ENCODE measurements at regions of chr5 and their contacts with region 1.

Region 1: GRCh38 chr5:96868603-96869371 is 7.5 kb upstream of the ERAP2 start:
- DNase-seq: peak; percentile 42
- H3K4me3 ChIP-seq: no peak overlapping the region
- CTCF ChIP-seq: peak; percentile 92

Region 2: GRCh38 chr5:96226941-96227552 is 641.7 kb before region 1 on chr5:
- CTCF ChIA-PET with region 1: no interaction called
- POLR2A ChIA-PET with region 1: no interaction called
- DNase-seq: peak; percentile 94
- H3K4me3 ChIP-seq: no peak overlapping the region
- CTCF ChIP-seq: no peak

Region 3: GRCh38 chr5:96668725-96669124 is 200.1 kb before region 1 on chr5:
- CTCF ChIA-PET with region 1: no interaction called
- POLR2A ChIA-PET with region 1: no interaction called
- DNase-seq: no peak
- H3K4me3 ChIP-seq: no peak overlapping the region
- CTCF ChIP-seq: no peak

Region 4: DNA sequence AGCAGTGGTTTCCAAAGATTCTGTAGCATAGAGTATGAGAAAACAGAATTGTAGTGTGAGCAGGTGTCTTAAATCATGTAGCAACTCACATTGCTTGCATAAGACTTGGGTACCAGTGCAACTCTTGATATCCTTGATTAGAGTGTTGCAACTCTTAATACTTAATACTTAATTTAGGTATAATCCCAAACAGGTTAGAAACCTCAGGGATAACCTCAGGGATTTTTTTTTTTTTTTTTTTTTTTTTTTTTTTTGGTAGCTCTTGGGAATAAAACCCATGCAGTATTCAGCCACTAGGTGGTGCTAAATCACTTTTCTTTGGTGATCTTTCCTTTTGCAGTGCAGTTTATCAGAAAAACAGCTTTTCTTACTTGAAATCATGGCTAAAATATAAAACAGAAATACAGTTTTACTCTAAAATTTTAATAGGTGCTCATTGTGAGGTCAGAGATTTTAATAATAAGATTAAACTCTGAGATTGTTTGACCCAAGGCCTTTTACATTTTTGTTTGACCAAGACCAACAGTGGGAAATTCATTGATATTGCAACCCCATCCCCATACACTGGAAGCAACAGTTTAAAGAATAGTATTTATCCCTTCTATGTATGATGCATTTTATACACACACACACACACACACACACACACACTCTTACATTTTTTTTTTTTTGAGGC is 116.3 kb before region 1 on chr5:
- CTCF ChIA-PET with region 1: interaction called, 11 read pairs
- POLR2A ChIA-PET with region 1: no interaction called
- DNase-seq: no peak
- H3K4me3 ChIP-seq: no peak overlapping the region
- CTCF ChIP-seq: peak; percentile 35

Region 5: DNA sequence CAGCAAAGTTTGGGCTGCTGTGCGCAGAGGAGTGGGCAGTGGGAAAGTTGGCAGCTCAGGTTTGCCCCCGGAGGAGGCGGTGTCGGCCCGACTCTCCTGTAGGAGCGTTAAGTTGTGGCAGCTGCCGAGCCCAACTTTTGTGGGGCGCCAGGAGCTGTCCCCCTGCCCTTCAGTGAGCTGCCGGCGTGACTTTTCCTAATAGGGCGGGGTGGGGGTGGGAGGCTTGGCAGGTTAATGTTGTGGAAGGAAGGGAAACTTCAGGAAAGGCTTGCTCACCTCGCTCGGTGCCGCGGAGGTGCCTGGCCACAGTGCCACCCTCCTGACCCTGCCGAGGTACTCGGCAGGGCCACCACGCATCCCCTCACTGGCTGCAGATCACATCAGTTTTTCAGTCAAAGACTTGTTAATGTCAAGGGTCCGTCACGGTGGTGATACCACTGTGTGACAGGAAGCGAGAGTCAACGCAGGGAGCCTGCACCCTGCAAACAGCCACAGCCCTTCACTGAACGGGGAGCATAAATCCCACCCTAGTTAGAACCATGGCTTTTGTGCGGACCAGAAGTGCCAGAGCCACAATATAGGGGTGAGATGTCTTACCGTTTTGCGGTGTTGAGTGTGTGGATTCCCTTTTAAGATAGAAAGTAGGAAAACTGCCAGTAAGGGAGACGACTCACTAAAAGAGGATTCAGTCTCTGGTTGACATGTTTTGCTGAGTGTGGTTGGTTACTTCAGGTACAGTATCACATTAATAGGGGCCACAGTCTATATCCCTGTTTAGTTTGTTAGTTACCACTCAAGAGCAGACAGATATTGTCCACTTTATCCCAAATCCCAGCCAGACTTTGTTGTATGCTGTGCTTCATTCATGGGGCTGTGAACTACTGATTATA is 67.9 kb after region 1 on chr5:
- CTCF ChIA-PET with region 1: interaction called, 14 read pairs
- POLR2A ChIA-PET with region 1: interaction called, 3 read pairs
- DNase-seq: no peak
- H3K4me3 ChIP-seq: peak overlapping the region; percentile 80
- CTCF ChIP-seq: no peak

Region 6: GRCh38 chr5:97044052-97044451 is 175.3 kb after region 1 on chr5:
- CTCF ChIA-PET with region 1: interaction called, 40 read pairs
- POLR2A ChIA-PET with region 1: no interaction called
- DNase-seq: no peak
- H3K4me3 ChIP-seq: no peak overlapping the region
- CTCF ChIP-seq: peak; percentile 16

Region 7: GRCh38 chr5:97149709-97150108 is 280.9 kb after region 1 on chr5:
- CTCF ChIA-PET with region 1: interaction called, 14 read pairs
- POLR2A ChIA-PET with region 1: no interaction called
- DNase-seq: no peak
- H3K4me3 ChIP-seq: no peak overlapping the region
- CTCF ChIP-seq: no peak